Lower leg skin (tissue), 4 donors: ENCODE measurements at regions of chr2 and their contacts with region 1.

Region 1: DNA sequence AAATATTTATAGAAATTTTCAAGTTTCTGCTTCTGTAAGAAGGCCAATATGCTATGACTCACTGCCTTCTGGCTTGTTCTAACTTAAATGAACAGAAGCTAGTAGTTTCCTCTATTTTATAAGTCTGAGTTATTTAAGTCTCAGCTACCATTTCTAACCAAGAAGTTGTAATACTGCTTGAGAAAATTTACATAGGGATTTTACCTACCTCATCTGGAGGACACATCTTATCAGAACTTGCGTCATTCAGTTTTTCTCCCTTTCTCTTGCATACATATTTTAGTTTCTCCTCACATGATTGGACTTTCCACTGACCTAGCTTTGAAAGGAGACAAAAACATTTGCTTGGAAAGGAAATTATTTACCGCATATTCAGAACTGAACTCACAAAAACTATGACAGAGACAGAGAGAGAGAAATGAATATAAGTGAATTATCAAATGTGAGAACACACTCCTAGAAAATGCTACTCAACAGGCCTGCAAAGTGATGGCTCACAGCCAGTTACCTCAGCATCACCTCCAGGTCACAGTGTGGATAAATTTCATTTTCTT is 81.1 kb upstream of the CD302 start:
- DNase-seq: no peak
- H3K4me3 ChIP-seq: no peak overlapping the region
- CTCF ChIP-seq: no peak
- POLR2A ChIP-seq: no peak

Region 2: DNA sequence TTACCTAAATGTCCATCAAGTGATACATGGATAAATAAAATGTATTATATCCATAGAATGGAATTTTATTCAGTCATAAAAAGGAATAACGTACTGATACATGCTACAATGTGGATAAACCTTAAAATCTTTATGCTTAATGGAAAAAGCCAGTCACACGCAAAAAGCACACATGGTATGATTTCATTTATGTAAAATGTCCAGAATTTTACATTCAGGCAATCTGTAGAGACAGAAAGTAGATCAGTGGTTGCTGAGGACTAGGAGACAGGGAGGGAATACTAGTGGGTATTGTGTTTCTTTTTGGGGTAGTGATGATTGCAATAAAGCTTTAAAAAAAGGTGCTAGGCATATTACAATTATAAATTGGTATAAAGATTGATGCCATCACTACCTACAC is 50.4 kb before region 1 on chr2:
- intact Hi-C with region 1: no loop called
- DNase-seq: no peak
- H3K4me3 ChIP-seq: no peak overlapping the region
- CTCF ChIP-seq: no peak
- POLR2A ChIP-seq: no peak

Region 3: GRCh38 chr2:159840616-159841015 is 38.5 kb before region 1 on chr2:
- intact Hi-C with region 1: no loop called
- DNase-seq: no peak
- H3K4me3 ChIP-seq: no peak overlapping the region
- CTCF ChIP-seq: no peak
- POLR2A ChIP-seq: no peak

Region 4: DNA sequence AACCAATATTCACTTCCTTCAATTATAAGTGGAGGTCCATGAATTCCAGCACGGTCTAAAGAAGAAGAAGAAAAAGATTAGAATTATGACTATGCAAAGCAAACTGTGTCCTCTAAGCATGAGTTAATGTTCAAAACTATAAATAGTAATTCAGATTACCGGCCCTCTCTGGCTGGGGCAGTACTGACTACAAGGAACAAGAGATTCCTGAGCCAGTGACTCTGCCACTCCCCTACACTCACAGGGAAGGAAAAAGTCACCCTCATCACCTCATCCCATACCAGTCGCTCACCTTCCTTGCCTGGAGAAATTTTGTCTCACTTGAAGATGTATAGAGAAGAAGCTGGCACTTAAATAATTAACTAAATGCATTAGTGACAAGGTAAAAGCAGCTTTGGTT is 24.6 kb before region 1 on chr2:
- intact Hi-C with region 1: loop called (anchors 1 kb)
- DNase-seq: no peak
- H3K4me3 ChIP-seq: no peak overlapping the region
- CTCF ChIP-seq: no peak
- POLR2A ChIP-seq: no peak